Activated T-helper 2 cell treated with anti-CD3 and anti-CD28 coated beads, Interferon-gamma antibody, Interleukin-2, Interleukin-4, amounts not matched to agents 10 μg/mL and 5 μg/mL and 100 μg/mL, durations not matched to agents 14 hours and 24 hours and 36 hours (primary cell): ENCODE measurements at regions of chr1 and their contacts with region 1.

Region 1: DNA sequence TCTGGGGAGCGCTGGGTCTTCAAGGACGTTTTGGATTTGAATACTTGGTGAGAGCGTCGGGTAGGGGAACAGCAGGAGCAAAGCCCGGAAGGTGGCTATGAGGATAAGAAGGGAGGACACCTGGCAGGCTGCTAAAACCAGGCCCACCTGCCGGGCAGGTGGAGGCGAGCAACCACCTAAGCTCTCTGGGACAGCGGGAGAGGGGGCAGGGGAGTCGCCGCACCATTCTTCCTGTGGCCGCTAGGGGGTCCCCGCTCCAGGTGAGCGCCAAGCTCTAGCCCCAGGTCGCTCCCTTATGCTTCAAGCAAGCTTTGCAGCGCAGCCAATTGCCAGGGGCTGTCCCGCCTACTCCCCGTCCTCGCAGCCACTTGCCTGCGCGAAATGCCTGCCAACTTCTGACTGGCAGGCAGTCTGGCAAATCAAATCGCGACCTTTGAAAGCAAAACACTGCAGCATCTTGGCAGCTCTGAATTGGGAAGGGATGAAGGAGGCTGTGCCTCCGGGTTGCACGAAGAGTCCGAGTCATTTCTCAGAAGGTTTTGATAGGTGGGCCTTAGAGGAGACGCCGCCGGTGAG is at the start of gene NIPAL3:
- DNase-seq: peak; percentile 98
- H3K4me3 Mint-ChIP-seq: peak within 1 kb of the TSS; percentile 96
- H3K27ac Mint-ChIP-seq: peak within 1 kb of the TSS; percentile 87
- H3K4me1 Mint-ChIP-seq: peaks cover 44% of the 10 kb centered on the region
- H3K27me3 Mint-ChIP-seq: no peaks in the 10 kb centered on the region
- total RNA-seq, gene NIPAL3: 24.6 and 28.6 TPM in 2 replicates

Region 2: DNA sequence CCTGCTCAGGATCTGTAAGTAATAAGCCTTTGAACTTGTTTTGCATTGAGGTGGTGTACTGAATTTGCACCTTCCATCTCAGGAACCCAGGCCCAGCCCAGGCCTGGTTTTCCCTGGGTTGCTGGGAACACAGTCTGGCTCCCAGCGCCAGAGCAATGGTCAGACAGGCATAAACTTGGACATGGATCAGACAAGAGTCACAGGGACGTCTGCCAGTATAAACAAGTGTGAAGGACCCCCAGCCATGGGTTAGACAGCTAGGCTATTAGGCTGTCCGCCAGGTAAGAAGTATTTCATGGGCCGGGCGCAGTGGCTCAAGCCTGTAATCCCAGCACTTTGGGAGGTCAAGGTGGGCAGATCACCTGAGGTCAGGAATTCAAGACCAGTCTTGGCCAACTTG is 233.8 kb before region 1 on chr1:
- intact Hi-C with region 1: no loop called
- DNase-seq: no peak
- H3K4me3 Mint-ChIP-seq: no peak overlapping the region
- H3K27ac Mint-ChIP-seq: no peak overlapping the region
- H3K4me1 Mint-ChIP-seq: peaks cover 4% of the 10 kb centered on the region
- H3K27me3 Mint-ChIP-seq: no peaks in the 10 kb centered on the region

Region 3: GRCh38 chr1:24191860-24192259 is 223.6 kb before region 1 on chr1:
- intact Hi-C with region 1: loop called (anchors 5 kb)
- DNase-seq: peak; percentile 33
- H3K4me3 Mint-ChIP-seq: no peak overlapping the region
- H3K27ac Mint-ChIP-seq: peak overlapping the region; percentile 83
- H3K4me1 Mint-ChIP-seq: peaks cover 50% of the 10 kb centered on the region
- H3K27me3 Mint-ChIP-seq: no peaks in the 10 kb centered on the region

Region 4: GRCh38 chr1:24502709-24503058 is 87.3 kb after region 1 on chr1 and contains the start of gene RCAN3:
- intact Hi-C with region 1: loop called (anchors 1 kb)
- DNase-seq: peak; percentile 90
- H3K4me3 Mint-ChIP-seq: peak within 1 kb of the TSS; percentile 96
- H3K27ac Mint-ChIP-seq: peak within 1 kb of the TSS; percentile 99
- H3K4me1 Mint-ChIP-seq: peaks cover 70% of the 10 kb centered on the region
- H3K27me3 Mint-ChIP-seq: no peaks in the 10 kb centered on the region
- total RNA-seq, gene RCAN3: 31.9 and 33.8 TPM in 2 replicates

Region 5: DNA sequence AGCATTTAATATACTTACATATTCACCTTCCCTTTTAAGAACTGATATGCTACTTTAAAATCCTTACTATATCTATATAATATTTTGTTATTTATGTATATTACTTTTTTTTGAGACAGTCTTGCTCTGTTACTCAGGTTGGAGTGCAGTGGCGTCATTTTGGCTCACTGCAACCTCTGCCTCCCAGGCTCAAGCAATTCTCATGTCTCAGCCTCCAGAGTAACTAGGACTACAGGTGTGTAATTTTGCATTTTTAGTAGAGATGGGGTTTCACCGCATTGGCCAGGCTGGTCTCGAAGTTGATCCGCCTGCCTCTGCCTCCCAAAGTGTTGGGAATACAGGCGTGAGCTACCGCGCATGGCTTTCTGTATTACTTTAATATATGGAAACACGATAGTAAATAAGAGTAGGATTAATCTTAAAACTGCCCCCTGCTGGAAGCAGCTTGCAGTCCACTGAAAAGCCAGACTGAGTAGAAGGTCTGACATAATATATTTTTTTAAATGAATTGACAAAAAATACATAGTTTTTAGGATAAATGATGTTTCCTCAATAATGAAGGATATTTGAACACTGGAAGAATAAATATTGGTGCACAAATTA is 111.6 kb after region 1 on chr1:
- intact Hi-C with region 1: loop called (anchors 1 kb)
- DNase-seq: no peak
- H3K4me3 Mint-ChIP-seq: no peak overlapping the region
- H3K27ac Mint-ChIP-seq: no peak overlapping the region
- H3K4me1 Mint-ChIP-seq: peaks cover 10% of the 10 kb centered on the region
- H3K27me3 Mint-ChIP-seq: no peaks in the 10 kb centered on the region

Region 6: DNA sequence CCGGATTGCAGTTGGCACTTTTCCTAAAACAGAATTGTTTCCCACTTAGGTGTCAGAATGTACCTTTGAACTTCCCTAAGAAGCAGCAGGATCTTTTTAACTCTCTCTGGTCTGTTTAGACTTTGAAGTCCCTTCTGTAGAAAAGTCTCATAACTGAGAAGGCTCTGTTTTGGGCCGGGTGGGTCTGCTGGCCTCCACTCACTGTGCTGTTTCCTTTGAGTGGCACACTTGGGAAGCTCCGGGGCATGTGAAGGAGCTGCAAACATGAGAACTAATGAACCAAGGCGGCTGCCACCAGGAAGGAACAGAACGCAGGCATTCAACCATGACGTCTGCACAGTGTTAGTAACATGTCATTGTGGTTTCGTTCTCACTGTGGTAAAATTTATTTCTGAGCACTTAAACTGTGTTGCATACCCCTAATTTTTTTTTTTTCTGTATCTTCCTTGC is 121.0 kb after region 1 on chr1:
- intact Hi-C with region 1: loop called (anchors 1 kb)
- DNase-seq: peak; percentile 43
- H3K4me3 Mint-ChIP-seq: peak overlapping the region; percentile 76
- H3K27ac Mint-ChIP-seq: peak overlapping the region; percentile 98
- H3K4me1 Mint-ChIP-seq: peaks cover 64% of the 10 kb centered on the region
- H3K27me3 Mint-ChIP-seq: no peaks in the 10 kb centered on the region

Region 7: DNA sequence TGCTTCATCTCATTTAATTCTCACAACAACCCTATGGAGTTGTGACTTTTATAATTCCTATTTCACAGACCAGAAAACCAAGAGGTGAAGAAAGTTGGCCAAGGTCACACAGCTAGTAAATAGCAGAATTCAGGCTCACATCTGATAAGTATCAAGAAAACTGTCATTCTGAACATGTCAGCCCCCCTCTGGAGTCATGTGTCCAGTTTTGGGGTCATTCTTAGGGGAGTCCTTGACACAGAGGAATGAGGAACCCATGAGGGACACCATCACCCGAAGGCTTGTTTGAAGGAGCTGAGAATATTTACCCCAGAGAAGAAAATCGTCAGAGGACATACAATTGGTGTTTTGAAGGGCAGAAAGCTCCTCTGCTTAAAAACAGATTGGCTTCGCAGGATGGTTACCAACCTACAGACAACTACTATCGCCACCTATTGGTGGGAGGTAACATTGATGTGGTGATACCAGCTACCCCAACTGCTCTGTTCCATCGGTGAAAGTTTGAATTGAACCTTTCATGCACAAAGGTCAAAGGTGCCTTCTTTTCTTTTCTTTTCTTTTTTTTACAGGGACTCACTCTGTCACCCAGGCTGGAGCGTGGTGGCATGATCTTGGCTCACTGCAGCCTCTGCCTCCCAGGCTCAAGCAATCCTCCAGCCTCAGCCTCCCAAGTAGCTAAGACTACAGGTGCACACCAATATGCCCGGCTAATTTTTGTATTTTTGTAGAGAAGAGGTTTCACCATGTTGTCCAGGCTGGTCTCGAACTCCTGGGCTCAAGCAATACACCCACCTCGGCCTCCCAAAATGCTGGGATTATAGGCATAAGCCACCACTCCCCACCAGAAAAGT is 171.8 kb after region 1 on chr1:
- intact Hi-C with region 1: loop called (anchors 2 kb)
- DNase-seq: peak; percentile 39
- H3K4me3 Mint-ChIP-seq: no peak overlapping the region
- H3K27ac Mint-ChIP-seq: no peak overlapping the region
- H3K4me1 Mint-ChIP-seq: no peaks in the 10 kb centered on the region
- H3K27me3 Mint-ChIP-seq: peaks cover 8% of the 10 kb centered on the region